Endothelial cell of umbilical vein (primary cell): ENCODE measurements at regions of chr22 and their contacts with region 1.

Region 1: GRCh38 chr22:30890686-30891442 is 77.7 kb downstream of the MORC2 start:
- DNase-seq: peak; percentile 19
- H3K4me3 ChIP-seq: no peak overlapping the region
- H3K27ac ChIP-seq: no peak overlapping the region
- H3K4me1 ChIP-seq: no peaks in the 10 kb centered on the region
- H3K27me3 ChIP-seq: no peaks in the 10 kb centered on the region
- CTCF ChIP-seq: peak; percentile 72 to 90
- POLR2A ChIP-seq: no peak

Region 2: GRCh38 chr22:30763815-30764686 is 126.8 kb before region 1 on chr22:
- CTCF ChIA-PET with region 1: interaction called, 78 read pairs
- POLR2A ChIA-PET with region 1: no interaction called
- dilution Hi-C with region 1: no loop called
- intact Hi-C with region 1: loop called (anchors 1 kb)
- DNase-seq: peak; percentile 77
- H3K4me3 ChIP-seq: no peak overlapping the region
- H3K27ac ChIP-seq: no peak overlapping the region
- H3K4me1 ChIP-seq: no peaks in the 10 kb centered on the region
- H3K27me3 ChIP-seq: no peaks in the 10 kb centered on the region
- CTCF ChIP-seq: peak; percentile 67 to 71
- POLR2A ChIP-seq: no peak

Region 3: DNA sequence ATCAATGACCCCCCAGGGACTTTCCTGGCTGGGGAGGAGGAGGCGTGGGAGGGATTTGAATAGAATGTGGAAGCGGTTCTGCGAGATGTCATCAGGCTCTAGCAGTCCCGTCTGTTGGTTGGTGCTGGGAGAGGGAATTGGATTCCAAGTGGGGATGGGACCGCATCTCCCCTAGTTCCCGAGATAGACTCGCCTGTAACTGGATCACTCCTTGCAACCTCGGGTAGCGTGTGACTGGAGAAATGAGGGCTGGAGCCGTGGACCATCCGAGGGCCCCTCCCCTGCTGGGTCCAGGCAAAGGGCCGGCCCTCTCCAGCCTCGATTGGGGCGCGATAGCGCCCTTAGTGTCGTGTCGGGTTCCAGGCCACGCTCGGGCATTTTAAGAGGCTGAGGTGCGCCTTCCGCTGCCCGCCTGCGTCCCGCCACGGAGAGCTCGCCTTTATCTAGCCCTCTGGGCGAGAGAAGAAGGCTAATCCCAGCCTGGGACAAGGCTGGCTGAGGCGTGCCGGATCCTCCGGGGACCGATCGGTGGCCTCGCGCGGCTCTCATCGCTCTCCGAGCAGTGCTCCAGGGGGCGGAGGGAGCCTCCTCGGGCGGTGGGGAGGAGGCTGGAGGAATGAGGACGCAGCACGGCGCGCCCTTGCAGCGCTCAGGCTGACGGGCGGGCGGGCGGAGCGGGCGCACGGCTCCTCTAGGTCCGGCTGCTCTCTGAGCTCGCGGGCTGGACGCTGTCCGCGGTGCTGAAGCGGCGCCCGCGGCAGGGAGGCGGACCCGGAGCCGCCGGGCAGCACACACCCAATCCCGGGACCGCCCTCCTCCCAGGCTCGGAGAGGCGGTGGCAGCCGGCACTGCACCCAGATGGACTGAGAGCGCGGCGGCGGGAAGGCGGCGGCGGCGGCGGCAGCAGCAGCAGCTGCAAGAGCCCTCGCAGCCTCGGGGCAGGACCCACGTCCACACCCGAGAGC is 88.4 kb before region 1 on chr22:
- CTCF ChIA-PET with region 1: interaction called, 13 read pairs
- POLR2A ChIA-PET with region 1: no interaction called
- dilution Hi-C with region 1: no loop called
- intact Hi-C with region 1: no loop called
- DNase-seq: peak; percentile 93
- H3K4me3 ChIP-seq: no peak overlapping the region
- H3K27ac ChIP-seq: no peak overlapping the region
- H3K4me1 ChIP-seq: peaks cover 12% of the 10 kb centered on the region
- H3K27me3 ChIP-seq: peaks cover 5 to 8% of the 10 kb centered on the region in 2 experiments
- CTCF ChIP-seq: peak in 1 of 2 donors; percentile 41
- POLR2A ChIP-seq: no peak

Region 4: DNA sequence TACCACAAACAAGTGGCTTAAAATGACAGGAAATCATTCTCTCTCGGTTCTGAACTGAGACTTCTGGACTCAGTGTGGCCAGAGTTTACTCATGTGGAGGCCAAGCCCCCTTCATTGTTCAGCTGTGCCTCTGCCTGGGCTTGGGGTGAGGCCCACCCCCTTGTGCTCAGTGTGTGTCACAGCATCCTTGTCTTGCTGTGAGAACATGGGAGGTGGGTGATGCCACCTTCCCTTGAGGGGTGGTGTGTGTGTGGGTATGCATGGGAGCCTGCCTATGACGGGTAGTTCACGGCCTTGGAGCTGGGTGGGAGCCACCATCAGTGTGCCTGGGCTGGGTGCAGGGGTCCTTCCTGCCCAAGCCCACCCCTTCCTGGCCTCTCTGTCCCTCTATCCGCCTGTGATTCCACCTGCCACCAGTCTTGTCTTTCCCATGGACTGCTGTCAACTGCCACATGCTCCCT is 24.0 kb before region 1 on chr22:
- CTCF ChIA-PET with region 1: interaction called, 8 read pairs
- POLR2A ChIA-PET with region 1: no interaction called
- dilution Hi-C with region 1: no loop called
- intact Hi-C with region 1: loop called (anchors 2 kb)
- DNase-seq: peak; percentile 80
- H3K4me3 ChIP-seq: no peak overlapping the region
- H3K27ac ChIP-seq: peak overlapping the region; percentile 19
- H3K4me1 ChIP-seq: peaks cover 14% of the 10 kb centered on the region
- H3K27me3 ChIP-seq: no peaks in the 10 kb centered on the region
- CTCF ChIP-seq: peak; percentile 37 to 44
- POLR2A ChIP-seq: no peak

Region 5: GRCh38 chr22:30920407-30920806 is 29.5 kb after region 1 on chr22:
- CTCF ChIA-PET with region 1: interaction called, 10 read pairs
- POLR2A ChIA-PET with region 1: no interaction called
- dilution Hi-C with region 1: no loop called
- intact Hi-C with region 1: no loop called
- DNase-seq: peak; percentile 62
- H3K4me3 ChIP-seq: no peak overlapping the region
- H3K27ac ChIP-seq: no peak overlapping the region
- H3K4me1 ChIP-seq: peaks cover 13% of the 10 kb centered on the region
- H3K27me3 ChIP-seq: no peaks in the 10 kb centered on the region
- CTCF ChIP-seq: peak; percentile 87 to 88
- POLR2A ChIP-seq: no peak

Region 6: GRCh38 chr22:31068970-31069369 is 178.1 kb after region 1 on chr22:
- CTCF ChIA-PET with region 1: no interaction called
- POLR2A ChIA-PET with region 1: no interaction called
- dilution Hi-C with region 1: no loop called
- intact Hi-C with region 1: no loop called
- DNase-seq: no peak
- H3K4me3 ChIP-seq: no peak overlapping the region
- H3K27ac ChIP-seq: no peak overlapping the region
- H3K4me1 ChIP-seq: peaks cover 6% of the 10 kb centered on the region
- H3K27me3 ChIP-seq: no peaks in the 10 kb centered on the region
- CTCF ChIP-seq: no peak
- POLR2A ChIP-seq: no peak

Region 7: GRCh38 chr22:31093086-31093850 is 202.4 kb after region 1 on chr22:
- CTCF ChIA-PET with region 1: no interaction called
- POLR2A ChIA-PET with region 1: no interaction called
- dilution Hi-C with region 1: no loop called
- intact Hi-C with region 1: no loop called
- DNase-seq: no peak
- H3K4me3 ChIP-seq: no peak overlapping the region
- H3K27ac ChIP-seq: no peak overlapping the region
- H3K4me1 ChIP-seq: no peaks in the 10 kb centered on the region
- H3K27me3 ChIP-seq: no peaks in the 10 kb centered on the region
- CTCF ChIP-seq: no peak
- POLR2A ChIP-seq: no peak